ENCODE measurements at regions of chr1 and their contacts with region 1.

Region 1: DNA sequence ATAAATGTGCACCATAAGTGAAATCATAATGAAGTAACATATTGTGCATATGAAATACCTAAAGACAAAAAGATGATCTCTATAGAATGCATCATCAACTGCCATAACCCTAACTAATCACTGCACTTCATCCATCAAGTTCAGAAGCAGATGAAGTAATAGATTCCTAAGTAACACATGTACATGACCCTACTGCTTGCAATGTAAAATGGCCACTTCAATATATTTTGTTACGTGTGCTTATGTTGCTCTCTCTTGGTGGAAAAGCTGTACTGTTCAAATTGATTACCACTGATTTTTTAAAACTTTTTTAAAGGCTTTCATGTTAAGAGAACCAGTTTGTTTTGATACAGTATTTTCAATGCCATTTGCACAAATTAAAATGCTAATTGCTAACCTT is 141.8 kb downstream of the TTLL7 start:
- DNase-seq: no peak
- H3K4me3 ChIP-seq: no peak overlapping the region
- H3K4me3 Mint-ChIP-seq: no peak overlapping the region
- H3K27ac Mint-ChIP-seq: no peak overlapping the region
- H3K4me1 ChIP-seq: no peaks in the 10 kb centered on the region
- H3K4me1 Mint-ChIP-seq: no peaks in the 10 kb centered on the region
- H3K27me3 ChIP-seq: no peaks in the 10 kb centered on the region
- H3K27me3 Mint-ChIP-seq: no peaks in the 10 kb centered on the region
- CTCF ChIP-seq: no peak

Region 2: GRCh38 chr1:83545066-83545862 is 311.8 kb before region 1 on chr1:
- CTCF ChIA-PET with region 1: no interaction called
- POLR2A ChIA-PET with region 1: no interaction called
- intact Hi-C with region 1: loop called (anchors 2 kb)
- DNase-seq: peak in 1 of 2 experiments; percentile 1
- H3K4me3 ChIP-seq: no peak overlapping the region
- H3K4me3 Mint-ChIP-seq: no peak overlapping the region
- H3K27ac Mint-ChIP-seq: no peak overlapping the region
- H3K4me1 ChIP-seq: no peaks in the 10 kb centered on the region
- H3K4me1 Mint-ChIP-seq: no peaks in the 10 kb centered on the region
- H3K27me3 ChIP-seq: no peaks in the 10 kb centered on the region
- H3K27me3 Mint-ChIP-seq: no peaks in the 10 kb centered on the region
- CTCF ChIP-seq: peak in 1 of 2 experiments; percentile 19

Region 3: DNA sequence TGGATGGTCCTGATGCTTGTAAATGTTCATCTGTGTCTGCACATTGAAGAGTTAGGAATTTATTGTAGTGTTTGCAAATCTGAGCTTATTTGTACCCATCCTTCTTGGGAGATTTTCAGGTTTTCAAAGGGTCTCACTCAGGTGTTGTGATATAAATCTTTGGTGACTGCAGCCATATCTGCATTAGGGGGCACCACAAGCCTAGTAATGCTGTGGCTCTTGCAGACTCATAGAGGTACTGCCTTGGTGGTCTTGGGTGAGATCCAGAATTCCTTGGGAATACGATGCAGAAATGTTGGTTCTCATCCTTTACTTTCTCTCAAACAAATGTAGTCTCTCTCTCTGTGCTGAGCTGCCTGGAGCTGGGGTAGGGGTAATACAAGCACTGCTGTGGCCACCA is 264.0 kb before region 1 on chr1:
- CTCF ChIA-PET with region 1: no interaction called
- POLR2A ChIA-PET with region 1: no interaction called
- intact Hi-C with region 1: loop called (anchors 1 kb)
- DNase-seq: no peak
- H3K4me3 ChIP-seq: no peak overlapping the region
- H3K4me3 Mint-ChIP-seq: no peak overlapping the region
- H3K27ac Mint-ChIP-seq: no peak overlapping the region
- H3K4me1 ChIP-seq: no peaks in the 10 kb centered on the region
- H3K4me1 Mint-ChIP-seq: no peaks in the 10 kb centered on the region
- H3K27me3 ChIP-seq: no peaks in the 10 kb centered on the region
- H3K27me3 Mint-ChIP-seq: peaks cover 4% of the 10 kb centered on the region
- CTCF ChIP-seq: no peak

Region 4: GRCh38 chr1:83705091-83705490 is 152.0 kb before region 1 on chr1:
- CTCF ChIA-PET with region 1: no interaction called
- POLR2A ChIA-PET with region 1: no interaction called
- intact Hi-C with region 1: no loop called
- DNase-seq: no peak
- H3K4me3 ChIP-seq: no peak overlapping the region
- H3K4me3 Mint-ChIP-seq: no peak overlapping the region
- H3K27ac Mint-ChIP-seq: no peak overlapping the region
- H3K4me1 ChIP-seq: no peaks in the 10 kb centered on the region
- H3K4me1 Mint-ChIP-seq: no peaks in the 10 kb centered on the region
- H3K27me3 ChIP-seq: no peaks in the 10 kb centered on the region
- H3K27me3 Mint-ChIP-seq: no peaks in the 10 kb centered on the region
- CTCF ChIP-seq: no peak